CD4-positive, alpha-beta memory T cell (primary cell): ENCODE measurements at regions of chr3 and their contacts with region 1.

Region 1: GRCh38 chr3:140972833-140973232 is 31.2 kb downstream of the SLC25A36 start:
- DNase-seq: peak in 1 of 5 donors; percentile 8
- H3K4me3 ChIP-seq: no peak overlapping the region
- H3K4me3 Mint-ChIP-seq: no peak overlapping the region
- H3K27ac ChIP-seq: no peak overlapping the region
- H3K27ac Mint-ChIP-seq: peak overlapping the region in 2 of 7 donors; percentile 1 to 38
- H3K4me1 ChIP-seq: peaks cover 7% of the 10 kb centered on the region
- H3K4me1 Mint-ChIP-seq: peaks cover 4 to 8% (median 4%) of the 10 kb centered on the region in 4 donors
- H3K27me3 ChIP-seq: no peaks in the 10 kb centered on the region
- H3K27me3 Mint-ChIP-seq: no peaks in the 10 kb centered on the region

Region 2: GRCh38 chr3:140898340-140899180 is 74.3 kb before region 1 on chr3:
- CTCF ChIA-PET with region 1: interaction called, 7 read pairs
- POLR2A ChIA-PET with region 1: no interaction called
- intact Hi-C with region 1: loop called (anchors 1 kb)
- DNase-seq: peak in 4 of 5 donors; percentile 28 to 43 (median 34)
- H3K4me3 ChIP-seq: no peak overlapping the region
- H3K4me3 Mint-ChIP-seq: no peak overlapping the region
- H3K27ac ChIP-seq: no peak overlapping the region
- H3K27ac Mint-ChIP-seq: no peak overlapping the region
- H3K4me1 ChIP-seq: no peaks in the 10 kb centered on the region
- H3K4me1 Mint-ChIP-seq: peaks cover 0 to 2% (median 0%) of the 10 kb centered on the region in 4 donors
- H3K27me3 ChIP-seq: no peaks in the 10 kb centered on the region
- H3K27me3 Mint-ChIP-seq: peaks cover 18 to 21% of the 10 kb centered on the region in 2 donors

Region 3: GRCh38 chr3:140922634-140923033 is 50.2 kb before region 1 on chr3:
- CTCF ChIA-PET with region 1: interaction called, 4 read pairs
- POLR2A ChIA-PET with region 1: no interaction called
- intact Hi-C with region 1: loop called (anchors 5 kb)
- DNase-seq: no peak
- H3K4me3 ChIP-seq: no peak overlapping the region
- H3K4me3 Mint-ChIP-seq: no peak overlapping the region
- H3K27ac ChIP-seq: no peak overlapping the region
- H3K27ac Mint-ChIP-seq: no peak overlapping the region
- H3K4me1 ChIP-seq: no peaks in the 10 kb centered on the region
- H3K4me1 Mint-ChIP-seq: no peaks in the 10 kb centered on the region
- H3K27me3 ChIP-seq: peaks cover 1% of the 10 kb centered on the region
- H3K27me3 Mint-ChIP-seq: peaks cover 5 to 17% of the 10 kb centered on the region in 2 donors

Region 4: GRCh38 chr3:141201122-141201521 is 228.3 kb after region 1 on chr3:
- CTCF ChIA-PET with region 1: no interaction called
- POLR2A ChIA-PET with region 1: no interaction called
- intact Hi-C with region 1: no loop called
- DNase-seq: no peak
- H3K4me3 ChIP-seq: no peak overlapping the region
- H3K4me3 Mint-ChIP-seq: no peak overlapping the region
- H3K27ac ChIP-seq: no peak overlapping the region
- H3K27ac Mint-ChIP-seq: no peak overlapping the region
- H3K4me1 ChIP-seq: no peaks in the 10 kb centered on the region
- H3K4me1 Mint-ChIP-seq: no peaks in the 10 kb centered on the region
- H3K27me3 ChIP-seq: no peaks in the 10 kb centered on the region
- H3K27me3 Mint-ChIP-seq: peaks cover 2 to 10% of the 10 kb centered on the region in 2 donors